Activated CD4-positive, alpha-beta T cell treated with anti-CD3 and anti-CD28 coated beads for 36 hours (primary cell): ENCODE measurements at regions of chr2 and their contacts with region 1.

Region 1: DNA sequence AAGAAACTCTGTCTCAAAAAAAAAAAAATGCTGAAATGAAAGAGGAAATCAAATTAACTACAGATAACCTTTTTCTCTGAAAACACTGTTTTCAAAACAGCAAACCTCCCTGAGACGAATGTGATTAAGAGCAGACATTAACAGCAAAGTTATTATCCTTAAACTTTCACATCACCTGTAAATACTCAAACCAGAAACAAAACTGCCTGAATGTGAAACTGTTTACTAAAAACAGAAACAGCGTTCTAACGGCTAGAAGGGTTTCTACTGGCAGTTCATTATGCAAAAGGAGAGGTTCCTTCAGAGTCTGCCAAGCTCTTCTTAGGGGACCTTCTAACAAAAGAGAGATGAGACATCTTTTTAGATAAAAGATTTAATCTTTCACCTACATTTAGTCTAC is 45.9 kb downstream of the PNO1 start:
- DNase-seq: no peak
- ATAC-seq: peak; percentile 94
- H3K4me3 Mint-ChIP-seq: peak overlapping the region; percentile 58
- H3K27ac Mint-ChIP-seq: peak overlapping the region; percentile 86
- H3K4me1 Mint-ChIP-seq: peaks cover 74% of the 10 kb centered on the region
- H3K27me3 Mint-ChIP-seq: no peaks in the 10 kb centered on the region

Region 2: DNA sequence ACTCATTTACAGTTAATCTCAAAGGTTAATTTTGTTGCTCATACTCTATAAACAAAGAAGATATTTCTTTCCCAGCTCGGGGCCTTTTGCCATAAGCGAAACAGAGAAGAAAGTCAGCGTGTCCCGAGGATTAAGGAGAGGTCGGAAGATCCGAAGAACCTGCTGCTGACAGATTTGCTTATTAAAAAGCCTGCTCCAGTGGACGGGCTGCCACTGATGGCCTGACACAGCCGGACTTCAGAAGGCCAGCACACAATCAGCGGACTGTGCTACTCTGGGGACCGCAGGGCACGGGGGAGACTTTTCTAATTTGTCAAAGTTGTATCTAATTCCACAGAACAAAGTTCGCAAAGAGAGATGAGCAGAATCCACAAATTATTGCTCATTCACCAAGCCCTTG is 491.1 kb before region 1 on chr2:
- CTCF ChIA-PET with region 1: no interaction called
- POLR2A ChIA-PET with region 1: no interaction called
- intact Hi-C with region 1: no loop called
- DNase-seq: no peak
- ATAC-seq: no peak
- H3K4me3 Mint-ChIP-seq: no peak overlapping the region
- H3K27ac Mint-ChIP-seq: no peak overlapping the region
- H3K4me1 Mint-ChIP-seq: no peaks in the 10 kb centered on the region
- H3K27me3 Mint-ChIP-seq: peaks cover 1% of the 10 kb centered on the region

Region 3: GRCh38 chr2:67923696-67924095 is 279.9 kb before region 1 on chr2:
- CTCF ChIA-PET with region 1: no interaction called
- POLR2A ChIA-PET with region 1: no interaction called
- intact Hi-C with region 1: no loop called
- DNase-seq: no peak
- ATAC-seq: no peak
- H3K4me3 Mint-ChIP-seq: no peak overlapping the region
- H3K27ac Mint-ChIP-seq: no peak overlapping the region
- H3K4me1 Mint-ChIP-seq: no peaks in the 10 kb centered on the region
- H3K27me3 Mint-ChIP-seq: peaks cover 19% of the 10 kb centered on the region

Region 4: GRCh38 chr2:68134554-68134953 is 69.0 kb before region 1 on chr2:
- CTCF ChIA-PET with region 1: no interaction called
- POLR2A ChIA-PET with region 1: no interaction called
- intact Hi-C with region 1: no loop called
- DNase-seq: no peak
- ATAC-seq: no peak
- H3K4me3 Mint-ChIP-seq: no peak overlapping the region
- H3K27ac Mint-ChIP-seq: no peak overlapping the region
- H3K4me1 Mint-ChIP-seq: no peaks in the 10 kb centered on the region
- H3K27me3 Mint-ChIP-seq: no peaks in the 10 kb centered on the region

Region 5: GRCh38 chr2:68157402-68158133 is 46.0 kb before region 1 on chr2 and contains the start of gene PNO1:
- CTCF ChIA-PET with region 1: interaction called, 3 read pairs
- POLR2A ChIA-PET with region 1: interaction called, 7 read pairs
- intact Hi-C with region 1: loop called in 1 of 2 experiments (anchors 1 kb)
- DNase-seq: peak; percentile 98
- ATAC-seq: peak; percentile 93
- H3K4me3 Mint-ChIP-seq: peak within 1 kb of the TSS; percentile 97
- H3K27ac Mint-ChIP-seq: peak within 1 kb of the TSS; percentile 100
- H3K4me1 Mint-ChIP-seq: peaks cover 51% of the 10 kb centered on the region
- H3K27me3 Mint-ChIP-seq: no peaks in the 10 kb centered on the region
- total RNA-seq, gene PNO1: 15.7 to 20.5 TPM

Region 6: GRCh38 chr2:68185541-68186164 is 17.9 kb before region 1 on chr2:
- CTCF ChIA-PET with region 1: interaction called, 31 read pairs
- POLR2A ChIA-PET with region 1: no interaction called
- intact Hi-C with region 1: no loop called
- DNase-seq: peak; percentile 81
- ATAC-seq: peak; percentile 51
- H3K4me3 Mint-ChIP-seq: no peak overlapping the region
- H3K27ac Mint-ChIP-seq: no peak overlapping the region
- H3K4me1 Mint-ChIP-seq: peaks cover 20% of the 10 kb centered on the region
- H3K27me3 Mint-ChIP-seq: no peaks in the 10 kb centered on the region

Region 7: GRCh38 chr2:68217729-68218128 is 14.1 kb after region 1 on chr2:
- CTCF ChIA-PET with region 1: interaction called, 12 read pairs
- POLR2A ChIA-PET with region 1: no interaction called
- intact Hi-C with region 1: loop called in 1 of 2 experiments (anchors 2 kb)
- DNase-seq: no peak
- ATAC-seq: no peak
- H3K4me3 Mint-ChIP-seq: no peak overlapping the region
- H3K27ac Mint-ChIP-seq: no peak overlapping the region
- H3K4me1 Mint-ChIP-seq: peaks cover 80% of the 10 kb centered on the region
- H3K27me3 Mint-ChIP-seq: no peaks in the 10 kb centered on the region

Region 8: DNA sequence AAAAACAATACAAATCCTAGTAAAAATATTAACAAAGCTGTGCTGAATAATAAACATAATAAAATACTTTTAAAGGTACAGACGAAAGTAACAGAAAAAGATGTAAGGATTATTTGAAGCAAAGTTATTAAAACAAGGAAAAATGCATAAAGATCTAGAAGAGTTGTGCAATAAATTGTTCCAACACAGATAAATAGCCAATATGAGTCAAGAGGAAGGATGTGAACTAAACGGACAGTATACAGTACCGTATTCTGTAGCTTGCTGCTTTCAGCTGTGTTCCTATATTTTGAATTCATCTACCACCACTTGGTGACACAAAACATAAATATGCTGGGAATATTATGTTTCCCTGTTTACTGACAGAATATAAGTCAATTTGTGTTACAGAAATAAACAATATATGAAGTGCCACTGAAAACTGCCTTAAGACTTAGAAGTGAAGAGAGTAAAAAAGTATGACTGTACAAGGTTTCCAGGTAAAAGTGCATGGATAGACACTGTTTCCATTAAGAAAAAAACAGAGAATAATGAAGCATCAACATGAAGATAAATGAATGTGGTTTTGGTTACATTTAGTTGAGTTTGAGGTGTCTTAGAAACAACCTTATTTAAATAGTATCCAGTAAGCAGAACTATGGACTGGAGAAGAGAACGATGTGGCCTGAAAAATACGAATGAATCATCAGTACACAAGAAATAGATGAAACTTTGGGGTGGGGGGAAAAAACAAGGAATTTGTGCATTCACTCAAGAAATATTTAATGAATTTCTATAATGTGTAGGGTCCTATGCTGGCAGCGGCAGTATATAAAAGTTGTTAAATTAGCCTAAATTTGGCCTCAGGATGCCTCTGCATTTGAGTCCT is 35.6 kb after region 1 on chr2:
- CTCF ChIA-PET with region 1: interaction called, 4 read pairs
- POLR2A ChIA-PET with region 1: no interaction called
- intact Hi-C with region 1: loop called in 1 of 2 experiments (anchors 5 kb)
- DNase-seq: no peak
- ATAC-seq: peak; percentile 52
- H3K4me3 Mint-ChIP-seq: no peak overlapping the region
- H3K27ac Mint-ChIP-seq: peak overlapping the region; percentile 83
- H3K4me1 Mint-ChIP-seq: peaks cover 79% of the 10 kb centered on the region
- H3K27me3 Mint-ChIP-seq: no peaks in the 10 kb centered on the region

Region 9: DNA sequence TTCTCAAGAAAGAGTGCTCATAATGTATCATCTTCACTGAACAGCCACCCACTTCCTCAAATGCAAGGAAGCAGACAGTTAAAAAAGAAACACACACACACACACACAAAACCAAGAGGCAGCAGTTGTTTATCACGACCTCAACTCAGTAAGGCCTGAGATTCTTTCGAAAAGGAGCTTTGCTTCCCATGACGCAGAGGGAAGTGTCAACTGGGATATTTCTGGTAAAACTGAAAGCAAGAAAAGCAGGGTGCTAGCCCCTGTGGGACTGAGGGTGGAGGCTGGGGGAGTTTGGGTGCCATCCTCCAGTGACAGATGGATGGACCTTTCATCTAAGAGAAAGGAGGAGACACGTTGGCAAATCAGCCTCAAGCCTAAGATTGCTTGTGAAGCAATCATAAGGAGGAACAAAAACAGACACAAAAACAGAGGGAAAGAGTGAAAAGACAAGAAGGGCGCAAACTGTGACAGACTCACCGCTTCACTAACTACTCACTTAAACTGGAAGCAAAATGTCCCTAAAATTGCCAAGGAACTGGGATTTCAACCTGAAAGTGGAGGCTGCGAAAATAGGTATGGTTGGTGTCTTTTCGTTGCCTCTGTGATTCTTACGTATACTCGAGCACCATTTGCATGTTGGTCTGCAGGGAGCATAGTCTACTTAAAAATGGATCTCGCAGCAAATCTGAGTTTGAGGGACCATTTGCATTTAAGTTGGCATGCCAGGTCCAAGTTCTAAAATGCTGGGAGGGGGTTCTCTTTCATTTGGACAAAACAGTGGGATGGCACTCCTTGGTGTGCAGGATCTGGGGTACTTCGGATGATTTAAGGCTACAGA is 531.3 kb after region 1 on chr2 and contains the start of gene ARHGAP25:
- CTCF ChIA-PET with region 1: no interaction called
- POLR2A ChIA-PET with region 1: no interaction called
- intact Hi-C with region 1: loop called in 1 of 2 experiments (anchors 10 kb)
- DNase-seq: peak; percentile 84
- ATAC-seq: peak; percentile 75
- H3K4me3 Mint-ChIP-seq: no peak within 1 kb of the TSS
- H3K27ac Mint-ChIP-seq: no peak within 1 kb of the TSS
- H3K4me1 Mint-ChIP-seq: peaks cover 40% of the 10 kb centered on the region
- H3K27me3 Mint-ChIP-seq: no peaks in the 10 kb centered on the region
- total RNA-seq, gene ARHGAP25: 57.9 to 73.2 TPM